ENCODE measurements at regions of chr4 and their contacts with region 1.

Region 1: DNA sequence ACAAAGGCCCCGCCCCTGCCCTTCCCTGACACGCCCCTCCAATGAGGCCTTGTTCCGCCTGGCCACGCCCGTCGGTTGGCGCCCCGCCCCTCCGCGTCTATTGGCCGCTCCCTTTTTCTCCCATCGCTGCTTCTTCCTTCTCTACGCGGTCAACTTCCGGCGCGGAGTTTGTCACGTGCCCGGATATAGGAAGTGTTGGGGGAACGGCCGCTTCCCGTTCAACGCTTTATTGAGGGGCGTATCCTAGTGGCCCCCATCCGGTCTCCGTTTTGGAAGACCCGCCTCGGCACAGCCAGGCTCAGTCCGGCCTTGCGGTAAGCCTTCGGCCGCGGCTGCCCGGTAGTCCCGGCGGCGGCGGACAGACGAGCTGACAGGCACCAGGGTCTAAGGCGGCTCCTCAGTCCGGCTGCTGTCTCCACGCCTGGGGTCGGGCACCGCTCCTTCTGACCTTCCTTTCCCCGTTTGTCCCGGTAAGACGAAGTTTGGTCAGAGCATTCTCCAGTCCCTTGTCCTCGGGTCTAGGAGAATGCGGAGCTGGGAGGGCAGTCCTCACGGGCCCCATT is at the start of gene EXOC1:
- DNase-seq: peak; percentile 97
- H3K4me3 Mint-ChIP-seq: no peak within 1 kb of the TSS
- H3K27ac Mint-ChIP-seq: peak within 1 kb of the TSS; percentile 73
- H3K4me1 Mint-ChIP-seq: peaks cover 29% of the 10 kb centered on the region
- H3K27me3 Mint-ChIP-seq: no peaks in the 10 kb centered on the region
- total RNA-seq, gene EXOC1: 34.5 to 37.2 TPM

Region 2: DNA sequence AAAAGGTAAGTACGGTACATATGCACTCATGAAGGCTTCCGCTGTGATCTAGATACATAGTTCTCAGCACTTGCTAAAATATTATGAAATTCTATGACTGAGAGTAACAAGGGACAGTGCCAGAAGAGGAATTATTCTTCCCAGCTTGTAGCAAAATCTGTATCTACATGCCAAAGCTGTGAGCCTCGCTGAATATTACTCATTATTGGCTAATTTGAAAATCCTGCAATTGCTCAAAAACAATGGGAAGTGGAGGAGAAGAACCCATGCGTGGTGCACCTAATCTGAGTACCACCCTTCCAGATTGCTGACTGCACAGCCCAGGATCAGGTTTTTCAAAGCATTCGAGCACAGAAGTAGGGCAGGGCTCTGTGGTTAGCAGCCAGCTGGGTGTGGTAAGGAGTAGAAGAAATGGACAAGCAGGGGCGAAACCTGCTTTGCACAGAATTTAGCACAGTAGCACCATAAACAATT is 244.1 kb before region 1 on chr4:
- CTCF ChIA-PET with region 1: no interaction called
- POLR2A ChIA-PET with region 1: no interaction called
- DNase-seq: peak; percentile 18
- H3K4me3 Mint-ChIP-seq: no peak overlapping the region
- H3K27ac Mint-ChIP-seq: peak overlapping the region; percentile 0
- H3K4me1 Mint-ChIP-seq: peaks cover 10% of the 10 kb centered on the region
- H3K27me3 Mint-ChIP-seq: peaks cover 3% of the 10 kb centered on the region

Region 3: GRCh38 chr4:55866973-55867574 is 13.5 kb after region 1 on chr4:
- CTCF ChIA-PET with region 1: interaction called, 17 read pairs
- POLR2A ChIA-PET with region 1: interaction called, 7 read pairs
- DNase-seq: no peak
- H3K4me3 Mint-ChIP-seq: no peak overlapping the region
- H3K27ac Mint-ChIP-seq: no peak overlapping the region
- H3K4me1 Mint-ChIP-seq: peaks cover 25% of the 10 kb centered on the region
- H3K27me3 Mint-ChIP-seq: no peaks in the 10 kb centered on the region

Measured in activated CD4-positive, alpha-beta memory T cell treated with anti-CD3 and anti-CD28 coated beads, Interleukin-2, amount 10 ng/mL, durations not matched to agents 7 days and 5 days (primary cell).